ENCODE measurements at regions of chr10 and their contacts with region 1.

Region 1: GRCh38 chr10:71902351-71902750 is 51.3 kb upstream of the PSAP start:
- DNase-seq: no peak
- H3K4me3 ChIP-seq: no peak overlapping the region
- H3K27ac ChIP-seq: no peak overlapping the region
- H3K4me1 ChIP-seq: peaks cover 4% of the 10 kb centered on the region
- H3K27me3 ChIP-seq: no peaks in the 10 kb centered on the region
- CTCF ChIP-seq: no peak
- POLR2A ChIP-seq: no peak

Region 2: DNA sequence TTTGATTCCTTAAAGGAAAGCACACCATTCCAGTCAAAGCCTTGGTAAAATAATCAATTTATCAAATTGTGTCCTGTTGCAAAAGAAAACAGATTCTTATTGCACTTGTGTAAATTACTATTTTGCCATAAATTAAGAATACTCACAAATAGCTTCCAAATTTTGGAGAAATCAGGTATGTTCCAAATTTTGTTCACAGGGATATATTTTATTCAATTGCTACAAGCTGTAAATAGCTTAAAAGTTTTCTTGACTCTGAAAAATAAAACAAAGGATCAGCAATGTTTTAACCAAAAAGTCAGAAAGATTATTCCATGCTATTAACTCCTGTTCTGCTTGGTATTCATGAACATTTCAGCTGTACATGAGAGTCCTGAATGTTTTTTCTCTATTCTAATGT is 14.5 kb after region 1 on chr10:
- CTCF ChIA-PET with region 1: interaction called, 11 read pairs
- POLR2A ChIA-PET with region 1: no interaction called
- dilution Hi-C with region 1: no loop called
- intact Hi-C with region 1: no loop called
- DNase-seq: no peak
- H3K4me3 ChIP-seq: no peak overlapping the region
- H3K27ac ChIP-seq: no peak overlapping the region
- H3K4me1 ChIP-seq: no peaks in the 10 kb centered on the region
- H3K27me3 ChIP-seq: no peaks in the 10 kb centered on the region
- CTCF ChIP-seq: no peak
- POLR2A ChIP-seq: no peak

Region 3: GRCh38 chr10:72173635-72174296 is 271.4 kb after region 1 on chr10:
- CTCF ChIA-PET with region 1: no interaction called
- POLR2A ChIA-PET with region 1: no interaction called
- dilution Hi-C with region 1: no loop called
- intact Hi-C with region 1: no loop called
- DNase-seq: no peak
- H3K4me3 ChIP-seq: no peak overlapping the region
- H3K27ac ChIP-seq: no peak overlapping the region
- H3K4me1 ChIP-seq: peaks cover 42% of the 10 kb centered on the region
- H3K27me3 ChIP-seq: no peaks in the 10 kb centered on the region
- CTCF ChIP-seq: no peak
- POLR2A ChIP-seq: no peak